RWPE1 (cell line): ENCODE measurements at regions of chr3 and their contacts with region 1.

Region 1: GRCh38 chr3:10772271-10773161 is 43.5 kb upstream of the SLC6A11 start:
- DNase-seq: peak; percentile 26
- H3K27ac ChIP-seq: peak overlapping the region; percentile 64
- CTCF ChIP-seq: no peak

Region 2: GRCh38 chr3:10619989-10620832 is 152.3 kb before region 1 on chr3:
- CTCF ChIA-PET with region 1: no interaction called
- POLR2A ChIA-PET with region 1: no interaction called
- DNase-seq: no peak
- H3K27ac ChIP-seq: no peak overlapping the region
- CTCF ChIP-seq: no peak

Region 3: DNA sequence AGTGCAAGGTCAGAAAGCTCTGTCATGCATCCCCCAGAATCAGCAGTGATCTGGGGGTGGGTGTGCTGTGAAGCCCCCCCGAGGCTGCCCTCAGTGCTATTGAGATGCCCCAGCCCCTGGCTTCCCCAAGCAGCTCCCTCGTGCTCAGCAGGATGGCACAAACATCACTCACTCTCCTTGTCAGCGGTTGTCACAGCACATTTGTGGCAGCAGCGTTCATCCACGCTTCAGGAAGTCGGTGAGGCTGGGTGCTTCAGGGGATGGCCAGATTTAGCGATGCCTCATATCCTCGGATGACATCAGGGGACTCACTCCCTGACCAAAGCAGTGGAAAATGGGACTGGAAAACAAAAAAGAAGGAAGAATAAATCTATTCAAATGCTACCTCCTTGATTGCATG is 10.9 kb before region 1 on chr3:
- CTCF ChIA-PET with region 1: interaction called, 10 read pairs
- POLR2A ChIA-PET with region 1: no interaction called
- DNase-seq: no peak
- H3K27ac ChIP-seq: no peak overlapping the region
- CTCF ChIP-seq: no peak

Region 4: GRCh38 chr3:10883478-10884234 is 111.1 kb after region 1 on chr3:
- CTCF ChIA-PET with region 1: interaction called, 12 read pairs
- POLR2A ChIA-PET with region 1: no interaction called
- DNase-seq: no peak
- H3K27ac ChIP-seq: no peak overlapping the region
- CTCF ChIP-seq: 0 out of 2 replicates have a peak, but pooled peaks have one; percentile 15